ENCODE measurements at regions of chrX and their contacts with region 1.

Region 1: DNA sequence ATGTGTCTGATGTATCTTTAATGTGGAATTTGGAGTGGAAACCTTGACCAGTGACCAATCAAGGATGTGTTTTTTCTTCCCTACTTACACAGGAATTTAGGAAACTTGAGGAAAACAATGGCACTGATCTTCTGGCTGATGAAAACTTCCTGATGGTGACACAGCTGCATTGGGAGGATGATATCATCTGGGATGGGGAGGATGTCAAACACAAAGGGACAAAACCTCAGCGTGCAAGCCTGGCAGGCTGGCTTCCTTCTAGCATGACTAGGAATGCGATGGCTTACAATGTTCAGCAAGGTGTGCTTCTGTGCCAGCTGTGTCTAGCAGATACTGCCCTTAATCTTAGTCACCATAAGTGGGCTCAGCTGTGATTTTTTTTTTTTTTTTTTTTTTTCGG is 12.6 kb downstream of the TAF1 start:
- DNase-seq: no peak
- H3K4me3 ChIP-seq: no peak overlapping the region
- H3K4me3 Mint-ChIP-seq: no peak overlapping the region
- H3K27ac ChIP-seq: no peak overlapping the region
- H3K27ac Mint-ChIP-seq: peak overlapping the region in 1 of 7 donors; percentile 40
- H3K4me1 ChIP-seq: no peaks in the 10 kb centered on the region
- H3K4me1 Mint-ChIP-seq: no peaks in the 10 kb centered on the region
- H3K27me3 ChIP-seq: no peaks in the 10 kb centered on the region
- H3K27me3 Mint-ChIP-seq: peaks cover 0 to 10% (median 0%) of the 10 kb centered on the region in 3 donors
- CTCF ChIP-seq: no peak

Region 2: GRCh38 chrX:71292669-71293365 is 85.9 kb before region 1 on chrX:
- intact Hi-C with region 1: loop called in 1 of 2 experiments (anchors 10 kb)
- DNase-seq: no peak
- H3K4me3 ChIP-seq: no peak overlapping the region
- H3K4me3 Mint-ChIP-seq: no peak overlapping the region
- H3K27ac ChIP-seq: no peak overlapping the region
- H3K27ac Mint-ChIP-seq: no peak overlapping the region
- H3K4me1 ChIP-seq: no peaks in the 10 kb centered on the region
- H3K4me1 Mint-ChIP-seq: peaks cover 2% of the 10 kb centered on the region
- H3K27me3 ChIP-seq: no peaks in the 10 kb centered on the region
- H3K27me3 Mint-ChIP-seq: peaks cover 0 to 4% (median 0%) of the 10 kb centered on the region in 3 donors
- CTCF ChIP-seq: no peak

Region 3: GRCh38 chrX:71439420-71439819 is 60.7 kb after region 1 on chrX:
- intact Hi-C with region 1: loop called in 1 of 2 experiments (anchors 10 kb)
- DNase-seq: no peak
- H3K4me3 ChIP-seq: no peak overlapping the region
- H3K4me3 Mint-ChIP-seq: no peak overlapping the region
- H3K27ac ChIP-seq: no peak overlapping the region
- H3K27ac Mint-ChIP-seq: peak overlapping the region in 3 of 7 donors; percentile 19 to 84 (median 26)
- H3K4me1 ChIP-seq: peaks cover 0 to 3% of the 10 kb centered on the region in 2 donors
- H3K4me1 Mint-ChIP-seq: peaks cover 12% of the 10 kb centered on the region
- H3K27me3 ChIP-seq: no peaks in the 10 kb centered on the region
- H3K27me3 Mint-ChIP-seq: peaks cover 0 to 12% (median 0%) of the 10 kb centered on the region in 3 donors
- CTCF ChIP-seq: no peak

Region 4: GRCh38 chrX:71550578-71550977 is 171.8 kb after region 1 on chrX:
- intact Hi-C with region 1: loop called in 1 of 2 experiments (anchors 10 kb)
- DNase-seq: no peak
- H3K4me3 ChIP-seq: no peak overlapping the region
- H3K4me3 Mint-ChIP-seq: no peak overlapping the region
- H3K27ac ChIP-seq: peak overlapping the region in 1 of 2 donors; percentile 27
- H3K27ac Mint-ChIP-seq: peak overlapping the region in 4 of 7 donors; percentile 18 to 72 (median 34)
- H3K4me1 ChIP-seq: peaks cover 13 to 16% of the 10 kb centered on the region in 2 donors
- H3K4me1 Mint-ChIP-seq: peaks cover 13% of the 10 kb centered on the region
- H3K27me3 ChIP-seq: no peaks in the 10 kb centered on the region
- H3K27me3 Mint-ChIP-seq: peaks cover 0 to 4% (median 0%) of the 10 kb centered on the region in 3 donors
- CTCF ChIP-seq: no peak

Region 5: GRCh38 chrX:71565474-71566041 is 186.8 kb after region 1 on chrX:
- intact Hi-C with region 1: loop called in 1 of 2 experiments (anchors 10 kb)
- DNase-seq: no peak
- H3K4me3 ChIP-seq: no peak overlapping the region
- H3K4me3 Mint-ChIP-seq: no peak overlapping the region
- H3K27ac ChIP-seq: no peak overlapping the region
- H3K27ac Mint-ChIP-seq: no peak overlapping the region
- H3K4me1 ChIP-seq: no peaks in the 10 kb centered on the region
- H3K4me1 Mint-ChIP-seq: no peaks in the 10 kb centered on the region
- H3K27me3 ChIP-seq: no peaks in the 10 kb centered on the region
- H3K27me3 Mint-ChIP-seq: peaks cover 0 to 3% (median 0%) of the 10 kb centered on the region in 3 donors
- CTCF ChIP-seq: no peak

Measured in CD14-positive monocyte (primary cell).